Activated CD4-positive, alpha-beta memory T cell treated with anti-CD3 and anti-CD28 coated beads for 36 hours (primary cell): ENCODE measurements at regions of chr1 and their contacts with region 1.

Region 1: GRCh38 chr1:235971571-235972310 is 93.1 kb downstream of the NID1 start:
- DNase-seq: peak; percentile 92
- H3K4me3 Mint-ChIP-seq: peak overlapping the region; percentile 53
- H3K27ac Mint-ChIP-seq: peak overlapping the region; percentile 53
- H3K4me1 Mint-ChIP-seq: peaks cover 16% of the 10 kb centered on the region
- H3K27me3 Mint-ChIP-seq: no peaks in the 10 kb centered on the region

Region 2: GRCh38 chr1:235783148-235783776 is 188.5 kb before region 1 on chr1:
- CTCF ChIA-PET with region 1: interaction called, 41 read pairs
- POLR2A ChIA-PET with region 1: no interaction called
- intact Hi-C with region 1: loop called (anchors 1 kb)
- DNase-seq: no peak
- H3K4me3 Mint-ChIP-seq: no peak overlapping the region
- H3K27ac Mint-ChIP-seq: no peak overlapping the region
- H3K4me1 Mint-ChIP-seq: no peaks in the 10 kb centered on the region
- H3K27me3 Mint-ChIP-seq: no peaks in the 10 kb centered on the region

Region 3: GRCh38 chr1:235843461-235843961 is 128.2 kb before region 1 on chr1:
- CTCF ChIA-PET with region 1: interaction called, 47 read pairs
- POLR2A ChIA-PET with region 1: no interaction called
- intact Hi-C with region 1: no loop called
- DNase-seq: no peak
- H3K4me3 Mint-ChIP-seq: no peak overlapping the region
- H3K27ac Mint-ChIP-seq: no peak overlapping the region
- H3K4me1 Mint-ChIP-seq: peaks cover 48% of the 10 kb centered on the region
- H3K27me3 Mint-ChIP-seq: no peaks in the 10 kb centered on the region

Region 4: DNA sequence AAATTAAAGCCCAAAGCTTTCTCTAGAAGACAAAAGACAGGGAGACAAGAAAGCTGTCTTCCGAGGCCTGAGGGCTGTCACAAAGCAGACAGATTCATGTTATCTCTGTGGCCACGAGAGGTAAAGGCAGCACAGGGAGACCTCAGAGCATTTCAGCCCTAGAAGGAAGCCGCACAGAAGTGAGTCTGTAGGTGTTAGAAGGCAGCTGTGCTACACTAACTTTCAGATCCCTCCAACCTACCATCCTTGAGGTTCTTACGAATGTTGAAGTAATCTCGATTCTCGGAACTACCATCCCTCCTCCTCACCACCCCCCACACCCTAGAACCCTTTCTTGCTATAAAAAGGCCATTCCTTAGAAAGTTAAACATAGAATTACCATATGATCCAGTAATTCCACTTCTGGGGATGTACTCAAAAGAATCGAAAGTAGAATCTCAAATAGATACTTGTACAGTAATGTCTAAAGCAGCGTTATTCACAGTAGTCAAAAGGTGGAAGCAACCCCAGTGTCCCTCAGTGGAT is 83.6 kb before region 1 on chr1:
- CTCF ChIA-PET with region 1: interaction called, 20 read pairs
- POLR2A ChIA-PET with region 1: interaction called, 3 read pairs
- intact Hi-C with region 1: loop called (anchors 1 kb)
- DNase-seq: peak; percentile 78
- H3K4me3 Mint-ChIP-seq: peak overlapping the region; percentile 20
- H3K27ac Mint-ChIP-seq: peak overlapping the region; percentile 80
- H3K4me1 Mint-ChIP-seq: peaks cover 46% of the 10 kb centered on the region
- H3K27me3 Mint-ChIP-seq: no peaks in the 10 kb centered on the region

Region 5: DNA sequence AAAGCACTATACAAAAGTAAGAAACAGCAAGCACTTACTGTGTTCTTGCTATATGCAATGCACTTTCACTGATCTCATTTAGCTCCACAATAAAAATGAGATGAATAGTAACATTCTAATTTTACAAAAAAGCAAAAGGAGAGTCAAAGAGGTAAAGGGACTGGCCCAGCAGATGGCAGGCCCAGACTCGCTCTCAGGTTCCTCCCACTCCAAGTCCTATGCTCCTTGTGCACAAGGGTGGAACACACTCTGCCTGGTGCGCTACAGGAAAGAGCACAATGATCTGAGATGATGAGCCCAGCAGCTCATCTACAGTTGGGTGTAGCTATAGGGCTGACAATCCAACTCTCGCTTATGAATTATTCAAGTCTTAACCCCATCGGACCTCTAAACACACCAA is 10.9 kb before region 1 on chr1:
- CTCF ChIA-PET with region 1: interaction called, 21 read pairs
- POLR2A ChIA-PET with region 1: no interaction called
- intact Hi-C with region 1: no loop called
- DNase-seq: no peak
- H3K4me3 Mint-ChIP-seq: no peak overlapping the region
- H3K27ac Mint-ChIP-seq: no peak overlapping the region
- H3K4me1 Mint-ChIP-seq: peaks cover 4% of the 10 kb centered on the region
- H3K27me3 Mint-ChIP-seq: no peaks in the 10 kb centered on the region

Region 6: DNA sequence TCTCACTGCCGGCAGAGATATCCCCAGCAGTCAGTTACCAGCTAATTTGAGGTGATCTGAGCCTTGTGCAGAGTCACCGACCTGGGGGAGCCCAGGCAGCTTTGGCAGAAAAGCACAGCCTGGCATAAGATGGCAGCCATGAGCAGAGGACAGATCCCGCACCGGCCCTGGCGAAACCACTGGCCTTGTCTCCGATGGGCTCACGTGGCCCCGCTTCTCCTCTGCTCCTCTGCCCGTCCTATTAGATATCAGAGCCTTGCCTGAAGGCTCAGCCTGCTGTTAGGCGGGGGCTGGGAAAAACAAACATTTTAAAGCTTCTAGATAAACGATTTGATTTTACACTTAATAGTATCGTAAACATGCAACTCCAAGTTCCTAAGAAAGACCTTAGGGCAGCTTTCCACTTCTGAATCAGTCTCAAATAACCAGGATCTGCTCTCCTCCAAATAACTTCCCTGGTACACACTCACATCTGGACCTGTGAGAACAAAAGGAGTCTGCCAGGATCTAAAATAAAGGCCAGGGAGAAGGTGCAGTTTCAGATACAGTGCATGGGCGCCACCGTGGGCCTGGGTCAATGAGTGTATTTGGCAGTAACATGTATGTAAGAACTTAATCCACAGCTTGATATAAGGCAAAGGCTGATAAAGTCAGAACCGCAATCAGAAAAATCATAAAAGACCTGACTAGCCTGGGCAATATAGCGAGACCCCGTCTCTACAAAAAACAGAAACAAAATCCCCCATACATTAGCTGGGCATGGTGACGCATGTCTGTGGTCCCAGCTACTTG is 432.4 kb after region 1 on chr1:
- CTCF ChIA-PET with region 1: no interaction called
- POLR2A ChIA-PET with region 1: no interaction called
- intact Hi-C with region 1: no loop called
- DNase-seq: no peak
- H3K4me3 Mint-ChIP-seq: no peak overlapping the region
- H3K27ac Mint-ChIP-seq: no peak overlapping the region
- H3K4me1 Mint-ChIP-seq: peaks cover 4% of the 10 kb centered on the region
- H3K27me3 Mint-ChIP-seq: peaks cover 3% of the 10 kb centered on the region